Endothelial cell of umbilical vein (primary cell): ENCODE measurements at regions of chr11 and their contacts with region 1.

Region 1: DNA sequence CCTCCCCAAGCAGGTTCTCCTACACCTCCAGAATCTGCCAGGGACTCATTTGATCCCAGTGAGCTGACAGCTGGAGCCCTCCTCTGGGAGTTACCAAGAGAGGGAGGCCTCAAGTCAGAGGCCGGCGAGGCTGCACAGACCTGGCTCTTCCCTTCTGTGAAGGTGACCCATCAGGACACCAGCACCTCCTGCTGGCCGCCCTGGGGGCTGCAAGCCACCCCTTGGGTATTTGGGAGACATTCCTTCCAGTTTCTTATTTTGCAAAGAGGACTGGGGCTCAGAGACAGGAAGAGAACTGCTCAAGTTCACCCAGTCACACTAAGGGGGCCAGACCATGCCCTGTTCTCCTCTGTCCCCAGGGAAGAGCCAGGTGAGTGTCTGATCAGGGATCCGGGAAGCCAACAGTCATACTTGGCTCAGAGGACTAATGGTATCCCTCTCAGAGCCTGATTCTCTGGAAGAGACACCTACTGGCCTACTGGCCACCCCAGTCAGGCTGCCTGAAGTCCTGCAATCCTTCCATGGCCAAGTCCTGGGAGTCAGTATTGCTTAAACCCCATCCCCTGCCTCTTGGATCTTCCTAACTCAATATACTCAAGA is 40.5 kb upstream of the RIC3 start:
- DNase-seq: no peak
- H3K4me3 ChIP-seq: no peak overlapping the region
- H3K27ac ChIP-seq: no peak overlapping the region
- H3K4me1 ChIP-seq: peaks cover 12% of the 10 kb centered on the region
- H3K27me3 ChIP-seq: peaks cover 3 to 6% of the 10 kb centered on the region in 2 experiments
- CTCF ChIP-seq: peak; percentile 43 to 55
- POLR2A ChIP-seq: no peak

Region 2: DNA sequence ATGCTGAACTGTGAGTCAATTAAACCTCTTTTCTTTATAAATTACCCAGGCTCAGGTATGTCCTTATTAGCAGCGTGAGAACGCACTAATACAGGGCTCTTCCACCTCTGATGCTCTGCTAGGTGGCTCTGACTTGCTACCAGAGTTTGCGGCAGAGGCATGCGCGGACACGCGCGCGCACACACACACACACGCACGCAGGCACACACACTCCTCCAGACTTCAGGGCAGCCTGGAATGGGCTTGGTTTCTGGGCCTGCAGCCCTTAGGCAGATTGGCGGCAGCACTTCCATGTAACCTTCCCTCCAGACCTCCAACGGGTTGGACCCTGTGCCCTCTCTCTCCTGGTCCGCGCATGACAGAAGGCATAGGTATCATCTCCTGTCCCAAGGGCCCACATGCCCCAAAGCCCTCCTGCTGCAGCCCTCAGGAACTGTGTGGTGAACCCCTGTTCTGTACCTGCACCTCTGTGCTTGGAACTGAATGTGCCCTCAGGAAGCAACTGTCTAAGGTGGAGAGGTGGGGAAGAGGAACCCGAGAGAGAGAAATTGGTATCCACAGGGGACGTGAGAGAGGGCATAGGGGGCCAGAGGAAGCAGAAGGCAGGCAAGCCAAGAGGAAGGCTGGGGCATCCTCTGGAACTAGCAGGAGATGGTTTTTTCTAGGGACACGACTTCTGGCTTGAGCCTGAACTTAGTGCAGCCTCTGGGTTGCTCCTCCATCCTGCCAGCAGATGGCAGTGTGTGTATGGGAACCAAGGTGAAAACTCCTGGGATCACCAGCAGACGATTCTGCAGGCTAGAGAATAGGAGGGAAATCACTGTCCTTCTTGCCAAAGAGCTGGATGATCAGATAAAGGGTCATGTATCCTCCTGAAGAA is 17.1 kb before region 1 on chr11:
- CTCF ChIA-PET with region 1: interaction called, 9 read pairs
- POLR2A ChIA-PET with region 1: no interaction called
- dilution Hi-C with region 1: no loop called
- intact Hi-C with region 1: loop called (anchors 1 kb)
- DNase-seq: peak; percentile 60
- H3K4me3 ChIP-seq: no peak overlapping the region
- H3K27ac ChIP-seq: no peak overlapping the region
- H3K4me1 ChIP-seq: no peaks in the 10 kb centered on the region
- H3K27me3 ChIP-seq: peaks cover 2 to 11% of the 10 kb centered on the region in 2 experiments
- CTCF ChIP-seq: peak; percentile 76 to 89
- POLR2A ChIP-seq: no peak